AG04450 (cell line): ENCODE measurements at regions of chr11 and their contacts with region 1.

Region 1: GRCh38 chr11:126989942-126990715 is 10.4 kb downstream of the KIRREL3 start:
- DNase-seq: peak; percentile 46
- H3K4me3 ChIP-seq: peak overlapping the region; percentile 49
- H3K27ac ChIP-seq: peak overlapping the region; percentile 86
- H3K27me3 ChIP-seq: no peaks in the 10 kb centered on the region
- CTCF ChIP-seq: peak; percentile 98

Region 2: DNA sequence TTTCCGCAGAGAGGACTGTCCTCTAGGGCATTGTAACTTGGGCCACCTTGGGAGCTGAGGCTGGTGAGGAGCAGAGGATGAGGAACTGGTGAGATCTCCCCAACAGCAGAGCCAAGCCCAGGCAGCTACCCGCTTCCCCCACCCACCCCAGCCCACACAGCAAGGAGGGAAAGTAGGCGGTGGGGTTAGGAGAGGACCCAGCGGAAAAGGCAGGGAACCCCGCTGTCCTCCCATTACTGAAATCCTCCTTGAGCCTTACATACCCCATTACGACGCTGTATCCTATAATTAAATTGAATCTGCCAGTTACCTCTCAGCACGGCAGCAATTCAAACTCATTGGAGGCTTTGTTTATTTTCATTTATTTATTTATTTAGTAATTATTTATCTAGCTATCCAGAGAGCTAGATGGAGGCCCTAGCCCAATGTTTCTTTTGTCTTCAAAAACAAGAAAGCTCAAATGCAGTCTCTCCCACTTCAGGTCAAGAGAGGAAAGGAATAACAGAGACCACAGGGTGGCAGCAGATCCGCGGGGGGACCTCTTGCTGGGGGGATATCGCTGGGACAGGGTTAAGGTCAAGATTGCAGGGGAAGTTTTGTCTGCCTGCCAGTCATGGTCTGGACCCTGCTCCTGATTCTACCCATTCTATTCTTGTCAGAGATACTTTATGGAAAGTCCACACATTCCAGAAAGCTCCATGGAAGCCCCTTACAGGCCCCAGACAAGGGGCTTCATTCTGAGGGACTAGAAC is 416.6 kb before region 1 on chr11:
- CTCF ChIA-PET with region 1: interaction called, 15 read pairs
- POLR2A ChIA-PET with region 1: no interaction called
- DNase-seq: no peak
- H3K4me3 ChIP-seq: no peak overlapping the region
- H3K27ac ChIP-seq: no peak overlapping the region
- H3K27me3 ChIP-seq: peaks cover 2% of the 10 kb centered on the region
- CTCF ChIP-seq: peak; percentile 41

Region 3: DNA sequence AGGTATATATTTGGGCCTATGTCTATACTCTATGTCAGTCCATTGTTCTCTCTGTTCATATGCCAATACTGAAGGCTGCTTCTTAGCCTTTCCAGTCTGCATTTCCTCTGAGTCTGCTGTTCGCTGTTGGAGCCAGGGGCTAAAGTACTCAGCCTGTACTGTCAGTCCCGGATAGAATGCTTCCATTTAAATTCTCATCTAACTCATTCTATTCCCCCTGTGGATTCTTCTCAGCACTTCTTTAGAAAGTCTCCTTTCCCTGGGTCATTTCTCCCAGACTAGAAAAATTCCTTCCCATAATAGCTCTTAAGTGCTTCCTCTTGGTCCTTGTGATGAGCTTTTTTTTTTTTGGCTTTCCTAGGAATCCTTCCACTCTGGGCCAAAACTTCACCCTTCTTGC is 282.6 kb before region 1 on chr11:
- CTCF ChIA-PET with region 1: interaction called, 23 read pairs
- POLR2A ChIA-PET with region 1: no interaction called
- DNase-seq: no peak
- H3K4me3 ChIP-seq: no peak overlapping the region
- H3K27ac ChIP-seq: no peak overlapping the region
- H3K27me3 ChIP-seq: no peaks in the 10 kb centered on the region
- CTCF ChIP-seq: no peak

Region 4: DNA sequence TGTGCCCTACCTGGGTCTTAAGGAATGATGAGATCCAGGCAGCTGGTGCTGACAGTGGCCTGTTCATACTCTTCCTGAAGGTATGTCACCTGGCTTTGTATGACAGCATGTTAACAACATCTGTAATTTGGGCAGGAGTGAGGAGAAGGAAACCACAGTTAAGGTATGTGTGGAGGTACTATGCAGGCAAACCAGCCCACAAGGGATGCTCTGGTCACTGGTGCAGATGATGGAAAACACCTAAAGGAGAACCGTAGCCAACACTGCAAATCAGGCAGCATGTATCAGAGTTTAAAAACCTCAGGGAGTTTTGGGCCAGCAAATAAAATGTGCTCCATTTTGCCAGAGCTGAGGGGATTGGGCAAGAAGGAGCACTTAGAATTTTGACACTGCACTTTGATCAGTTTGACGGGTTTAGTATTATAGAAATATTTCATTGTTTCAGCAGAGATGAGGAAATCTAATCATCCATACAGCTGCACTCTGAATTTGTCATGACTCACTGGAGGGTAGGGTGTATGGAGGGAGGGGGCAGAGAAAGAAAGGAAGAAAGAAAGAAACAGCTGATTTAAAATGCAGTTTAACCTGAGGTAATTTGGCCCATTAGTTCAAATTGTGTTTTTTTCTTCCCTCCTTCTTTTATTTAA is 250.5 kb before region 1 on chr11:
- CTCF ChIA-PET with region 1: interaction called, 15 read pairs
- POLR2A ChIA-PET with region 1: no interaction called
- DNase-seq: no peak
- H3K4me3 ChIP-seq: no peak overlapping the region
- H3K27ac ChIP-seq: peak overlapping the region; percentile 13
- H3K27me3 ChIP-seq: no peaks in the 10 kb centered on the region
- CTCF ChIP-seq: no peak

Region 5: DNA sequence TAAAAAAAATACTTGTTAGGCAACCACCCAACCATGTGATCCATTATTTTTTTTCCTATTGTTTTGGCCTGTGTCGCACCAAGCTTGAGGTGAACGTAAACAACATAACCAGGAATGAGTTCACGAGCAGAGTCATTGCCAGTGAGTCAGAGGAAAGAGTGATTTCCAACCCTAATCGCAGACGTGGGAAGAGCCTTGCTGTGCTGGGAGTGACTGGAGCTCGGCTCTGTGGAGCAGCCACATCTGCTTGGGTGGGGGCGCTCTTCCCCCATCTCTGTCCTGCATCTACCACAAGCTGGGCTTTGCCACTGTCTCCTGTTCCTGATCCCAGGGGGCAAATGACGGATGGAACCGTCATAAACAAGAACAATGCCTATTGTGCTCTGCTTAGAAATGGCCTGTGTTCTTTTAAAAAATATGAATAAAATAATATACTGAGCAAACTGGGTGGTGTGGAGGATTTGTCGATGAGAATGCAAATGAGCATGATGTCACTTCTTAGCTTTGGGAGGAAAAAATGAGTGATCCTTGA is 199.5 kb before region 1 on chr11:
- CTCF ChIA-PET with region 1: interaction called, 20 read pairs
- POLR2A ChIA-PET with region 1: no interaction called
- DNase-seq: peak; percentile 88
- H3K4me3 ChIP-seq: no peak overlapping the region
- H3K27ac ChIP-seq: peak overlapping the region; percentile 52
- H3K27me3 ChIP-seq: no peaks in the 10 kb centered on the region
- CTCF ChIP-seq: peak; percentile 49

Region 6: DNA sequence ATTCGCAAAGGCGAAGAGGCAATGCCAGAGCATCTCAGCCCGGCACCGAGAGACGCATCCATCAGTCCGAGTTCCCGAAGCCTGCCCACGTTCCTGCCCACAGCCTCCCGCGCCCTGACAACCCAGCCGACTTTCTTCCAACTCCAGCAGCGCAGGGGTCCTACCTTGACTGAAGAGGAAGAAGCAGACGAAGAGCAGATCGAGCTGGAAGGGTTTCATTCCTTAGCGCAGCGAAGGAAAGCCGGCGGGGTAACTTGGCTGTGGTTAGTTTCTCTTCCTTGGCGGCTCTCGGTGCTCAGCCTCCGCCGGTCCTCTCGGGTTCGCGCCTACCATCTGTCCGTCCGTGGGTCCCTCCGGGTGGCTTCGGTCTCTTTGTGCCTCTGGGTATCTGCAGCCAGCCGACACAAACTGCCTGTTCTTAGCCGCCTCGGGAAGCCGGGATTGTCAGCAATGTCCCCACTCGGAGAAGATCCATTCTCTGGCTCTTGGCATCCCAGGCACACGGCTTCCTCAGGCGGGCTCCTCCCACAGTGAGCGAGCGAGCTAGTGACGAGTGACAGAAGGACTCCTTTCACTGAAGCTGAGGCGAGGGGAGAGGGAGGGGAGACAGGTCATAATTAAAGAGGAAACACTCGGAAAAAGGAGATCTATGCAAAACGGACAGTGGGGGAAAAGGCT is 10.3 kb after region 1 on chr11 and contains the start of gene KIRREL3:
- CTCF ChIA-PET with region 1: interaction called, 13 read pairs
- POLR2A ChIA-PET with region 1: interaction called, 3 read pairs
- DNase-seq: no peak
- H3K4me3 ChIP-seq: peak within 1 kb of the TSS; percentile 80
- H3K27ac ChIP-seq: peak within 1 kb of the TSS; percentile 52
- H3K27me3 ChIP-seq: no peaks in the 10 kb centered on the region
- CTCF ChIP-seq: no peak
- polyA plus RNA-seq, gene KIRREL3: 2.3 and 2.8 TPM in 2 replicates

Region 7: GRCh38 chr11:127023991-127024390 is 33.9 kb after region 1 on chr11:
- CTCF ChIA-PET with region 1: no interaction called
- POLR2A ChIA-PET with region 1: no interaction called
- DNase-seq: no peak
- H3K4me3 ChIP-seq: no peak overlapping the region
- H3K27ac ChIP-seq: no peak overlapping the region
- H3K27me3 ChIP-seq: peaks cover 23% of the 10 kb centered on the region
- CTCF ChIP-seq: no peak